Mammary epithelial cell (primary cell): ENCODE measurements at regions of chr3 and their contacts with region 1.

Region 1: DNA sequence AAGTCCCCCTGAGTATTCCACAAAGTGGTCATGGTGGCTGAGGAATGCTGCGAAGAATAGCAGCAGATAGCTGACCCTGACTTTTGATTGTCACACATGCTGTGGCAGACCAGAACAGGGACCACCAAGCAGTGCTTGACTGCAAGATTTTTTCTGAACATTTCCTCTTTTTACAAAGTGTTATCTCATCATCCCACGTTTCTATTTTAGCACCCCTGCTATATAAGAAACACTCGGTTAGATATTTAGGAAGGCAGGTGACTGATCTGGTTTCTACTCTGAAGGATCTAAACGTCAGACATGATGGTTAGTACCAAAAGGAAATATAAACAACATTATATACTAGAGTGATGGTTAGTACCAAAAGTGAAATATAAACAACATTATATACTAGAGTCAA is 9.1 kb downstream of the SLC25A26 start:
- DNase-seq: no peak
- H3K4me3 ChIP-seq: no peak overlapping the region
- H3K27ac ChIP-seq: no peak overlapping the region
- H3K4me1 ChIP-seq: no peaks in the 10 kb centered on the region
- H3K27me3 ChIP-seq: no peaks in the 10 kb centered on the region
- CTCF ChIP-seq: no peak

Region 2: DNA sequence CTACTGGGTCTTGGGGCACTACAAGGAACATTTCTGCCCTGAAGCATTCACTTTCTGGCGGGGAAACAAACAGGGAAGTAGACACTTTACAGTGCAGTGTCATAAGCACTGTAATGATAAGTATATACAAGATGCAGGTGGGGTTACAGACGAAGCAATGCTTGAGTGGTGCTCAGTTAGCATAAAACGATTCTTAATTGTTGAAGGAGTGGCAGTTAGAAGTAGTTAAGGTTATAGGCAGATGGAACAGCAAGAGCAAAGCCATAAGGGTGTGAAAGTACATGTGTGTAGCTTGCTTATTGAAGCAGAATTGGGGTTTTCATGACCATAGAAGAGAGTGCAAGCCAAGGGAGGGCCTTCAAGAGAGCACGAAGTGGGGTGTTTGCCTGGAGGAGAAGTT is 37.1 kb after region 1 on chr3:
- CTCF ChIA-PET with region 1: no interaction called
- dilution Hi-C with region 1: loop called (anchors 5 kb)
- in situ Hi-C with region 1: no loop called
- intact Hi-C with region 1: no loop called
- DNase-seq: no peak
- H3K4me3 ChIP-seq: no peak overlapping the region
- H3K27ac ChIP-seq: no peak overlapping the region
- H3K4me1 ChIP-seq: no peaks in the 10 kb centered on the region
- H3K27me3 ChIP-seq: no peaks in the 10 kb centered on the region
- CTCF ChIP-seq: no peak

Region 3: GRCh38 chr3:66302288-66302687 is 72.4 kb after region 1 on chr3:
- CTCF ChIA-PET with region 1: no interaction called
- dilution Hi-C with region 1: no loop called
- in situ Hi-C with region 1: no loop called
- intact Hi-C with region 1: no loop called
- DNase-seq: no peak
- H3K4me3 ChIP-seq: no peak overlapping the region
- H3K27ac ChIP-seq: no peak overlapping the region
- H3K4me1 ChIP-seq: no peaks in the 10 kb centered on the region
- H3K27me3 ChIP-seq: no peaks in the 10 kb centered on the region
- CTCF ChIP-seq: no peak